BJ (cell line): ENCODE measurements at regions of chr16 and their contacts with region 1.

Region 1: GRCh38 chr16:3129137-3130131 is 5.4 kb upstream of the ZNF213 start:
- DNase-seq: no peak
- H3K4me3 ChIP-seq: no peak overlapping the region
- H3K27me3 ChIP-seq: no peaks in the 10 kb centered on the region
- CTCF ChIP-seq: peak; percentile 92

Region 2: GRCh38 chr16:3003582-3004302 is 125.7 kb before region 1 on chr16:
- CTCF ChIA-PET with region 1: interaction called, 12 read pairs
- POLR2A ChIA-PET with region 1: no interaction called
- DNase-seq: peak; percentile 91
- H3K4me3 ChIP-seq: peak overlapping the region; percentile 5; the same call in 1 of the 2 replicates
- H3K27me3 ChIP-seq: no peaks in the 10 kb centered on the region; the same call in 1 of the 2 replicates
- CTCF ChIP-seq: peak; percentile 50

Region 3: DNA sequence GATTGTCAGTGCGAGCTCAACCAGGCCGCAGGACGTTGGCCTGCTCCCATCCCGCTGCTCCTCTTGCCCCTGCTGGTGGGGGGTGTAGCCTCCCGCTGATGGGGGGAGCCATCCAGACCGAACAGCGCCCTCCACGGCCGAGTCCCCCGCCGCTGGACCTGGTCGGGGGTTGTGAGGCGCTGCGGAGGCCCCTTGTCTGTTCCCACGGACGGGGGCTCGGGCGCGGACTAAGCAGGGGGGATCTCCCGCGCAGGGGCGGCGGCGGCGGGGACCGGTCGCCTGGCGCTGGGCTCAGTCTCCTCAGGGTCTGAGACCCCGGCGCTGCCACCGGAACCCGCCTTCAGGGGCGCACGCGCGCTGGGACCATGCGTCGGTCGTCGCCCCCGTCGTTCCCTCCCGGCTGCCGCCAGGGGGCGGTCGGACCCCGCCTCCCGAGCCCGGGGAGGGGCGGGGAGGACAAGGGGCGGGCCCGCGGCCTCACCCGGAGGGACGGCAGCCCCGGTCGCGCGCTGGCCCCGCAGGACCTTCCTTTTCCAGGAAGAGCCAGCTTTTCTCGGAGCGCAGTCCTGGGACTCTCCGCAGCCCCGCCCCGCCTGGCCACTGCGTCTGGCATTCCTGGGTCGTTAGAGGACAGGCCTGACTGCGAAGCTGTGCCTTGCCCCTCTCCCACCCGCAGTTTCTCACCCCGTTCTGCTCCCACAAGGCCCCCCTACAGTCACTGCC is 70.3 kb before region 1 on chr16:
- CTCF ChIA-PET with region 1: interaction called, 56 read pairs
- POLR2A ChIA-PET with region 1: no interaction called
- DNase-seq: peak; percentile 41
- H3K4me3 ChIP-seq: peak overlapping the region; percentile 98
- H3K27me3 ChIP-seq: no peaks in the 10 kb centered on the region
- CTCF ChIP-seq: peak; percentile 51

Region 4: GRCh38 chr16:3099732-3100499 is 29.5 kb before region 1 on chr16:
- CTCF ChIA-PET with region 1: interaction called, 11 read pairs
- POLR2A ChIA-PET with region 1: no interaction called
- DNase-seq: no peak
- H3K4me3 ChIP-seq: peak overlapping the region; percentile 20; the same call in 1 of the 2 replicates
- H3K27me3 ChIP-seq: peaks cover 17% of the 10 kb centered on the region
- CTCF ChIP-seq: no peak

Region 5: GRCh38 chr16:3112058-3112880 is 17.2 kb before region 1 on chr16 and contains the start of gene ZNF205:
- CTCF ChIA-PET with region 1: interaction called, 11 read pairs
- POLR2A ChIA-PET with region 1: no interaction called
- DNase-seq: no peak
- H3K4me3 ChIP-seq: peak within 1 kb of the TSS; percentile 73
- H3K27me3 ChIP-seq: no peaks in the 10 kb centered on the region
- CTCF ChIP-seq: no peak
- polyA plus RNA-seq, gene ZNF205: 4.2 and 9.0 TPM in 2 replicates

Region 6: GRCh38 chr16:3150346-3151218 is 21.1 kb after region 1 on chr16:
- CTCF ChIA-PET with region 1: interaction called, 15 read pairs
- POLR2A ChIA-PET with region 1: interaction called, 6 read pairs
- DNase-seq: peak; percentile 80
- H3K4me3 ChIP-seq: peak overlapping the region; percentile 55
- H3K27me3 ChIP-seq: no peaks in the 10 kb centered on the region
- CTCF ChIP-seq: no peak

Region 7: GRCh38 chr16:4601036-4601863 is 1471.8 kb after region 1 on chr16:
- CTCF ChIA-PET with region 1: no interaction called
- POLR2A ChIA-PET with region 1: no interaction called
- DNase-seq: no peak
- H3K4me3 ChIP-seq: no peak overlapping the region
- H3K27me3 ChIP-seq: peaks cover 4% of the 10 kb centered on the region
- CTCF ChIP-seq: no peak